Activated B cell treated with CpG ODN at 0.5 μM for 24 hours (primary cell): ENCODE measurements at regions of chr13 and their contacts with region 1.

Region 1: DNA sequence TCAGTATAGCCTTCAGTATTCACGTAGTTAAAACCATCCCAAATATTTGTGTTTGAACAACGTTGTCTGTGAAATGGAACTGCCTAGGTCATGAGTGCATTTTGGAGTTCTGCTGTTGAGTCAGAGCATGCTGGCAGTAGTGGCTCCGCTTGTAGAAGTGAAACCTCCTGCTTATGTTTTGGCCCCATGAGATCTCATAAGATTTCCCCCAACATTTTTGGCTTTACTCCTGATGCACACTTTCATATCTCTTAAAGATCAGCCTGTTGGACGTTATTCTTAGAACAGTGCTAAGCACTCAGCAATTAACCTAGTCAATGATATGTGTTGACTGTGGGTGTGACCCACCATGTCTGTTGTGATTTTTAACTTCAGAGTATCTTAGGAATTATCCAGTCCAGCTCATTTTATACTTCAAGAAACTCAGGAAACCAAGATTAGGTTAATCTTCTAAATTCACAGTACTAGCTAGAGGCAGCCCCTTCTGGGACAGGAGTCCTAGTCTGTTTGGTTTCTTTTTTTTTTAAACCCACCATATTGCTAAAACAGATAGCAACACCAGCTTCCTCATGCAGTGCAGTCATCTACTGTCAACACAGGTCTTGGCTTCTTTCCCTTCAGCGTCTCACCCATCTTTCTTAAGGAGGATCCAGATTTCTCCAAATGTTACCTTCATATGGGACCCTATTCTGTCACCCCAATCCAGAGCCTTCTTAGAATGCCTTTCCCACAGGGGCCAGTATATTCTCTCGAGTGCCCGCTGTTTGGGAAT is 26.2 kb downstream of the RAP2A start:
- DNase-seq: no peak
- ATAC-seq: peak; percentile 95
- H3K4me3 Mint-ChIP-seq: peak overlapping the region; percentile 57
- H3K27ac Mint-ChIP-seq: peak overlapping the region; percentile 89
- H3K4me1 Mint-ChIP-seq: peaks cover 39% of the 10 kb centered on the region
- H3K27me3 Mint-ChIP-seq: no peaks in the 10 kb centered on the region
- CTCF ChIP-seq: no peak

Region 2: DNA sequence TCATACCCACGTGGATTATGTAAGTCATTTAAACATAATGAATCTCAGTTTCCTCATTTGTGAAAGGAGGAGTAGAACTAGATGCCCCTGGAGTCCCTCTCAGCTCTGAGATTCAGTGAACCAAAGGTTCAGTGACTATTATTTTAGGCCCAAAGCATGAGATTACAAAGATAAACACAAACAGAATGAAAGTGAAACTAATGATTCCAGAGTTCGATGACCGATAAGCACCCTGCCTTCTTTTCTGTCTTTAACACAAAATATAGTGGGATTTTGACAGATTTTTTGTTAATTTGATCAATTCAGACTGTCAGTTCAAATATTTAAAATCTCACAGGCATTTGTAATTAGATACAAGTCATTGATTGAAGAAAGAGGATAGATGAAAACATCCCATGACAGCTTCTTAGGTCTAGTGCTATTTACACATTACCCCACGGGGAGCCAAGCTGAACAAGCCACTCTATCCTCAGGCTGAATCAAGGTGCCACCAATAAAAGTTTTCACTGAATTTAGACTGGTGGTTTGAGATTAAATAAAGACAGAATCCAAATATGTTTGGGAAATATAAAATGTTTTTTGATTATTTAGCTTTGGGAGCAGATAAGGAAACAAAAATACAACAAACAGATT is 90.8 kb before region 1 on chr13:
- CTCF ChIA-PET with region 1: no interaction called
- POLR2A ChIA-PET with region 1: no interaction called
- intact Hi-C with region 1: loop called (anchors 1 kb)
- DNase-seq: no peak
- ATAC-seq: no peak
- H3K4me3 Mint-ChIP-seq: peak overlapping the region; percentile 84
- H3K27ac Mint-ChIP-seq: peak overlapping the region; percentile 57
- H3K4me1 Mint-ChIP-seq: peaks cover 16% of the 10 kb centered on the region
- H3K27me3 Mint-ChIP-seq: no peaks in the 10 kb centered on the region
- CTCF ChIP-seq: no peak

Region 3: DNA sequence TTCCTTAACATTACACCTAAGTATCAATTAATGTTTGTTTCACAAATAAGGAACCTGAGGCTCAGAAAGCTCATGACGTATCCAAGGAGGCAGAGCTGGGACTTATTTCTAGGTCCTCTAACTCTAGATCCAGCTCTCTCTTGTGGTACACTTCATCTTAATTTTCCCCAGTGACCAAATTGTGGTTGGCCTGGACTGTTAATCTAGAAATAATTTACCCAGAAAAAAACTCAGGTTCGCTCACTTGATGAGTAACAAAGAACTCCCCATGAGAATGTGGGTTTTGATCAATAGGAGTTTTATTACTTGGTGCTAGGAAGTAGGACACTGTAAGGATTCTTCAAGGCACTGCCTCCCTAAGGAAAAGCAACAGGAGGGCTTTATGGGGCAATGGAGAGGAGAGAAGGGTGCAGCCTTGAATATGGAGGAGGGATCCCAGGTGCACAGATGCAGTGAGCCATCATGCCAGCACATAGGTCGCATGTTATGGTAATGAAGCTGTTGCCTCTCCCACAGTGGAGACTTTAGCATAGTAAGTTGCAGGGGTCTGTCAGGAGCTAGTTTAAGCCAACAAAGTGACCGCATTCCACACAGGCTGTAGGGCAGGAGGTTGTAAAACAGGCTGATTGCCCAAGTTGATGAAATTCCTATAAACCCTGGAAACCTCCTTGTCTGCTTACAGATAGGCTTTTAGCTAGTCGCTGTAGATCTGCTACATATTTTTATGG is 11.5 kb before region 1 on chr13:
- CTCF ChIA-PET with region 1: no interaction called
- POLR2A ChIA-PET with region 1: interaction called, 8 read pairs
- intact Hi-C with region 1: loop called (anchors 1 kb)
- DNase-seq: no peak
- ATAC-seq: no peak
- H3K4me3 Mint-ChIP-seq: no peak overlapping the region
- H3K27ac Mint-ChIP-seq: no peak overlapping the region
- H3K4me1 Mint-ChIP-seq: peaks cover 2% of the 10 kb centered on the region
- H3K27me3 Mint-ChIP-seq: no peaks in the 10 kb centered on the region
- CTCF ChIP-seq: no peak

Region 4: DNA sequence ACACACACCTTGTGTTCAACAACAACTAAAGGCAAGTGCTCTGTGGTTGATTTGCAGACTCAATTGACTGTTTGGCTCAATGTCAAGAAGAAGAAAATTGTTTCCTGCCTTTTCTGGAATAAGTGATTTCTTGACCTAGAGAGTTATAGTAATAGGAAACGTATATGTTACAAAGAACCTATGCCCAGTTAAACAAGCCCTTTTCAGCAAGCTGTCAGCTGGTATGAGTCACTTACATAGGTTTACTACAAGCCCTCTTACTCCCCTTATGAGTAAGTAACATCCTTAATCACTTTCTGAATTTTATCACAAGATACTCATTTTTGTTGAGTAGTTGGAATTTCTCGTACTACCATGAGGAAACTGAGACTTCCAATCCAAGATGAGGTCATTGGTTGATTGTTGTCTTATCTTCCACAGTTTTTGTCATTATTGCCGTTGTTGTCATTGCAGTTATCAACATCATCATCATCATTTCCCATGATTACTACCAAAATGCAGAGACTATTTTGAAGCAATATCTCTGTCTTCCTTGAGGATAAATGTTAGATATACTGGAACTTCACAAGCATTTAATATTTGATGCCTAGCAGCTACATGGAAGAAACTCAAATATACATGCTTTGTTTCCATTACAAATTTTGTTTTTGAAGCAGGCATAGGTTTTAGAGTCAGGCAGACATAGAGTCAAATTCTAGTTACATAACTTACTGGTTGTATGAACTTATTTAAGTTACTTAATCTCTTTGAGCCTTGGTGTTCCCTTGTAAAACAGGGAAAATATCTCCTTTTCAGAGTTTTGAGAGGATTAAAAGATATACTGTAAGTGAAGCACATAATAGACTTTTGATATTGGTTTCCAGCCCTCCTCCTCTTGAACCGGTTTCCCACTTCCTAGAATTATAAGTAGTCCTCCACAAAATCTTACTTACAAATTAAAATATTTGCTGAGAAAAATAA is 79.7 kb after region 1 on chr13:
- CTCF ChIA-PET with region 1: no interaction called
- POLR2A ChIA-PET with region 1: no interaction called
- intact Hi-C with region 1: no loop called
- DNase-seq: no peak
- ATAC-seq: no peak
- H3K4me3 Mint-ChIP-seq: no peak overlapping the region
- H3K27ac Mint-ChIP-seq: no peak overlapping the region
- H3K4me1 Mint-ChIP-seq: no peaks in the 10 kb centered on the region
- H3K27me3 Mint-ChIP-seq: peaks cover 6% of the 10 kb centered on the region
- CTCF ChIP-seq: no peak

Region 5: DNA sequence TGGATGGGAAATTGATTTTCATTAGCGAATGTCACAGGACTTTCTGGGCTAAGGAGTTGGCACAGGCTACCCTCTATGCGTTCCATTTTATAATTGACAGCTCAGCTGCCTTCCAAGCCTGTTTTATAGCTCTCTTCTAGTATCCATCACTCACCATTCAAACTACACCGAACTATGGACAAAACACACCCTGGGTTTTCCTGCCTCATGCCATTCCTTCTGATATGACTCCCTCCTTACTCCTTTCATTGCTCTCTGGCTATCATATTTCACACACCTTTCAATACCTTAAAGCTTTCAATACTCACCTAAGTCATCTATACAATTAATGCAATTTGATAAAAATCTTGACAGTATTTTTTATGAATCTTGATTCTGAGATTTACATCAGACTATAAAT is 155.1 kb after region 1 on chr13:
- CTCF ChIA-PET with region 1: no interaction called
- POLR2A ChIA-PET with region 1: no interaction called
- intact Hi-C with region 1: no loop called
- DNase-seq: no peak
- ATAC-seq: no peak
- H3K4me3 Mint-ChIP-seq: no peak overlapping the region
- H3K27ac Mint-ChIP-seq: no peak overlapping the region
- H3K4me1 Mint-ChIP-seq: no peaks in the 10 kb centered on the region
- H3K27me3 Mint-ChIP-seq: peaks cover 4% of the 10 kb centered on the region
- CTCF ChIP-seq: no peak

Region 6: GRCh38 chr13:98523455-98524102 is 1063.4 kb after region 1 on chr13:
- CTCF ChIA-PET with region 1: no interaction called
- POLR2A ChIA-PET with region 1: no interaction called
- intact Hi-C with region 1: no loop called
- DNase-seq: no peak
- ATAC-seq: no peak
- H3K4me3 Mint-ChIP-seq: no peak overlapping the region
- H3K27ac Mint-ChIP-seq: peak overlapping the region; percentile 71
- H3K4me1 Mint-ChIP-seq: peaks cover 94% of the 10 kb centered on the region
- H3K27me3 Mint-ChIP-seq: no peaks in the 10 kb centered on the region
- CTCF ChIP-seq: no peak

Region 7: DNA sequence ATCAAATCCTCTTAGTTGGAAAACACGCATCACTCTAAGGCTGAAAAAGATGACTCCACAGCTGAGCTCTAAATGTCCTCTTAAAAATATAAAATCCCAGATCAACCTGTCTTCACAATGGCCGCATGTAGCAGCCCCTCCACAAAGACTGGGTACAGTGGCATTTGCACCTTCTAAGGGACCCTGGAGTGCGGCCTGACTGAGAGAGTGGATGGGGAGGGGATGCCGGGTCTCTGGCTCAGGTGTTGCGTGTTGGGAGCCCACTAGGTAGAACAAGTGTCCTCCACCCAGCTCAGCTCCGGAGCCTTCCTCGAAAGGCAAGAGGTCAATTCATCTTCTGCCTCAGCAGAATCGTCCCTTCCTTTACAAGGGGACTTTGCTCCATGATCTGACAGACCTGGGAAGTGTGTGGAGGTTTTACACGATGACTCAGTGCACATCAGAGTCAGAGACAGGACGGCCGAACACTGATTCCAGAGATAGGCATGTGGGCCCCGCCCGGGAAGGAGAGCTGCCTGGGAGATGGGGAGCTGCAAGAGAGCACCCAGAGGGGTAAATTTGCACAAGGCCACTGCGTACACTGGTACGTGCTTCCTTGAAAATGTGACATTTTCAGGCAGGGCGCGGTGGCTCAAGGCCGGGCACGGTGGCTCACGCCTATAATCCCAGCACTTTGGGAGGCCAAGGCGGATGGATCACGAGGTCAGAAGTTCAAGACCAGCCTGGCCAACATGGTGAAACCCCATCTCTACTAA is 1315.8 kb after region 1 on chr13:
- CTCF ChIA-PET with region 1: no interaction called
- POLR2A ChIA-PET with region 1: no interaction called
- intact Hi-C with region 1: no loop called
- DNase-seq: no peak
- ATAC-seq: no peak
- H3K4me3 Mint-ChIP-seq: no peak overlapping the region
- H3K27ac Mint-ChIP-seq: no peak overlapping the region
- H3K4me1 Mint-ChIP-seq: no peaks in the 10 kb centered on the region
- H3K27me3 Mint-ChIP-seq: peaks cover 9% of the 10 kb centered on the region
- CTCF ChIP-seq: no peak